Activated CD4-positive, alpha-beta memory T cell treated with anti-CD3 and anti-CD28 coated beads, Interleukin-2, amount 10 ng/mL, durations not matched to agents 7 days and 5 days (primary cell): ENCODE measurements at regions of chr5 and their contacts with region 1.

Region 1: DNA sequence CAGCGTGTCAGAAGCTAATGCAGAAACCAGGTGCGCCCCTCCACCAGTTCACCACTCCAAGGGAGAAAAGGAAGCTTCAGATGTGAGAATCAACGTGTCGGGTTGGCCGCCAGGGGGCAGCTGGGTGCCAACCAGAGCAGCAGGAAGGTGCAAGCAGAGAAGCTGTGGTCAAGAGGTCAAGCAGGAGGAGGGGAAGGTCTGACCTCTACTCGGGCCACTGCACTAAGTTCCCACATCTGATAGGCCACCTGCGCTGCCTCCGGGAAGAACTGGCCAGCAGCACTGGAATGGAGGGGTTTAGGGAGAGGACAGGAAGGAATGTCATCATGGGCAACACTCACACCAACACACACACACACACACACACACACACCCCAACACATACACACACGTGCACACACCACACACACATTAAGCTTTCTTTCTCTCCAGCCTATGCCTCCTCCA is 31.4 kb downstream of the ANXA6 start:
- DNase-seq: peak; percentile 67
- H3K4me3 Mint-ChIP-seq: no peak overlapping the region
- H3K27ac Mint-ChIP-seq: peak overlapping the region; percentile 88
- H3K4me1 Mint-ChIP-seq: peaks cover 34% of the 10 kb centered on the region
- H3K27me3 Mint-ChIP-seq: no peaks in the 10 kb centered on the region

Region 2: GRCh38 chr5:151051066-151051930 is 74.9 kb before region 1 on chr5:
- CTCF ChIA-PET with region 1: interaction called, 37 read pairs
- POLR2A ChIA-PET with region 1: no interaction called
- DNase-seq: peak; percentile 73
- H3K4me3 Mint-ChIP-seq: no peak overlapping the region
- H3K27ac Mint-ChIP-seq: peak overlapping the region; percentile 26
- H3K4me1 Mint-ChIP-seq: peaks cover 11% of the 10 kb centered on the region
- H3K27me3 Mint-ChIP-seq: no peaks in the 10 kb centered on the region

Region 3: GRCh38 chr5:151115274-151115905 is 10.8 kb before region 1 on chr5:
- CTCF ChIA-PET with region 1: interaction called, 63 read pairs
- POLR2A ChIA-PET with region 1: interaction called, 14 read pairs
- DNase-seq: peak; percentile 71
- H3K4me3 Mint-ChIP-seq: no peak overlapping the region
- H3K27ac Mint-ChIP-seq: no peak overlapping the region
- H3K4me1 Mint-ChIP-seq: peaks cover 2% of the 10 kb centered on the region
- H3K27me3 Mint-ChIP-seq: no peaks in the 10 kb centered on the region

Region 4: GRCh38 chr5:151150471-151151262 is 24.4 kb after region 1 on chr5:
- CTCF ChIA-PET with region 1: interaction called, 49 read pairs
- POLR2A ChIA-PET with region 1: interaction called, 13 read pairs
- DNase-seq: peak; percentile 83
- H3K4me3 Mint-ChIP-seq: peak overlapping the region; percentile 50
- H3K27ac Mint-ChIP-seq: peak overlapping the region; percentile 96
- H3K4me1 Mint-ChIP-seq: peaks cover 95% of the 10 kb centered on the region
- H3K27me3 Mint-ChIP-seq: no peaks in the 10 kb centered on the region

Region 5: DNA sequence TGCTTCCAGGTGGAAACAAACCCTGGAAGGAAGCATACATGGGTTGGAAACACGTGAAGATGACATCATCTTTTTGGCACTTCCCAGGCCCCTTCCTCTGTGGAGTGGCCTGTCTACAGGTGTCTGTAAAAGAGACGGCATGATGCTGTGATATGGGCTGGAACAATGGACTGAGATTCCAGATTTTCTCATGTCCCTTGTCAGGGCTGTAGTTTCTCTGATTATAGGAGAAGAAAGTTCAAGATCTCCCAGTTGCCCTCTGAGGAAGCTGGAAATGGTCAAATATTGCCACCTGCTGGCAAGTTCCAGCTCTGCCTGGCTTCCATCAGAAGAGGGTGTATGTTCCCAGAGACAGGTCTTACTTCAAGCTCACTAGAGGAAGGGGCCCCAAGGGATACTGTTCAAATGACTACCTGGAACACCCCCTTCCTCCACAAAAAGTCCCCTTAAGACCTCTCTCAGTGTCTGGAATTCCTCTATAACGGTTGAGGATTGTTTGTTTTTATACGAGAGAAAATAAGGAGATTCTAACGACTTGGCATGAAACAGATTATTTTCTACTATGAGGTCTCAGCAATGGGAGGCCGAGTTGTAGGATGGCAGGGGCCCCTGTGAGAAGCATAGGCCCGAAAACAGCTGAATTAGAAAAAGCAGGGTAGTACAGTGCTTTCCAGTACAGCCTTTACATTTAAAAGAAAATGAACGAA is 38.6 kb after region 1 on chr5:
- CTCF ChIA-PET with region 1: interaction called, 242 read pairs
- POLR2A ChIA-PET with region 1: interaction called, 22 read pairs
- DNase-seq: peak; percentile 86
- H3K4me3 Mint-ChIP-seq: no peak overlapping the region
- H3K27ac Mint-ChIP-seq: no peak overlapping the region
- H3K4me1 Mint-ChIP-seq: peaks cover 7% of the 10 kb centered on the region
- H3K27me3 Mint-ChIP-seq: no peaks in the 10 kb centered on the region

Region 6: DNA sequence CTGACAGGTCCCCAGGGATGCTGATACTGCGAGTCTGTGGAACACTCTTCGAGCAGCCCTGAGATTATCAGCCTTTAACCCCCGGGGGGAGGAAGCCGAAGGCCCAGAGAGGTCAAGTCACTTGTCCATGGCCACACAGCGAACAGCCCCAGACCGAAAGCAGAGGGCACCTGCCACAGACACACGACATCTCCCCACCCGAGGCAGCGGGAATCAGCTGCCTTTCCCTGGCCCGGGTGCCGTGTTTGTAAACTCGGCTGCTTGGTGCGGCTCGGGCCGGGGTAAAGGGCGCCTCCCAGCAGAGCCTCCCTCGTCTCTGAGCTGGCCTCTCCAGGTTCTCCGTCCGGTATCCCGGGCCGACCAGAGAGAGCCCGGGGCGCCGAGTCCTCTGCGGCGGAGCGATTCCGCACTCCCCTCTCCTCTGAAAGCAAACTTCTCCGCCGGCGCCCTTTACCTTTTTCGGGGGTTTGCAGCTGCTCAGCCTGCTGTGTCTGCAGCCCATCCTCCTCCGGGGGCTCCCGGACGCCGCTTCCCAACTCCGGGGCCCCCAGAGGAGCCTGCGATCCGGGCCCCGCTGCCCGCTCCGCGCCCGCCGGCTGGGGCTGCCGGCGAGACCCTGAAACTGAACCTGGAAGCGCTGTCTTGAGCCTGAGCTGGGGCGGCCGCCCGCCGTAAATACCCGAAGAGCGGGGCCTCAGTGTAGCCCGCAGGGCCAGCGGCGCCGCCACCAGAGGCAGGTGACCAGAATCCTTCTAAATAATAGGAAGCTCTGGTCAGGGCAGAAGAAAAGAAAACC is 97.4 kb after region 1 on chr5 and contains the start of gene CCDC69:
- CTCF ChIA-PET with region 1: interaction called, 17 read pairs
- POLR2A ChIA-PET with region 1: interaction called, 3 read pairs
- DNase-seq: peak; percentile 67
- H3K4me3 Mint-ChIP-seq: peak within 1 kb of the TSS; percentile 78
- H3K27ac Mint-ChIP-seq: peak within 1 kb of the TSS; percentile 85
- H3K4me1 Mint-ChIP-seq: peaks cover 55% of the 10 kb centered on the region
- H3K27me3 Mint-ChIP-seq: no peaks in the 10 kb centered on the region
- total RNA-seq, gene CCDC69: 62.6 to 64.2 TPM

Region 7: DNA sequence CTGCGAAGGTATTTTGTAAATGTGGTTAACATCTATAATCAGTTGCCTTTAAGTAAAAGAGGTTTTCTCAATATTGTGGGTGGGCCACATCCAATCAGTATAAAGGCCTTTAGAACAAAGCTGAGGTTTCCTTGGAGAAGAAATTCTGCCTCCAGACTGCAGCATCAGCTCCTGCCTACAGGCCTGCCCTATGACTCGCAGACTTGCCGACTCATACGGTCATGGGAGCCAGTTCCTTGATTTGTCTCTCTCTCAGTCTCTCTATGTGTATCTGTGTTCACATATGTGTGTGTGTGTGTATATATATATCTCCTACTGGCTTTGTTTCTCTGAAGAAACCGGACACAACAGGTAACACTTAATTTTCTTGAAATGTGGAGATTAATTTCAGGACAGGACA is 366.5 kb after region 1 on chr5:
- CTCF ChIA-PET with region 1: no interaction called
- POLR2A ChIA-PET with region 1: no interaction called
- DNase-seq: no peak
- H3K4me3 Mint-ChIP-seq: no peak overlapping the region
- H3K27ac Mint-ChIP-seq: no peak overlapping the region
- H3K4me1 Mint-ChIP-seq: no peaks in the 10 kb centered on the region
- H3K27me3 Mint-ChIP-seq: no peaks in the 10 kb centered on the region